ENCODE measurements at regions of chr18 and their contacts with region 1.

Region 1: GRCh38 chr18:9348079-9348681 is 13.6 kb downstream of the TWSG1 start:
- DNase-seq: no peak
- H3K4me3 ChIP-seq: no peak overlapping the region
- H3K27ac ChIP-seq: no peak overlapping the region
- H3K4me1 ChIP-seq: peaks cover 19% of the 10 kb centered on the region
- H3K27me3 ChIP-seq: no peaks in the 10 kb centered on the region
- CTCF ChIP-seq: no peak

Region 2: GRCh38 chr18:9137168-9138066 is 210.8 kb before region 1 on chr18:
- CTCF ChIA-PET with region 1: no interaction called
- POLR2A ChIA-PET with region 1: no interaction called
- intact Hi-C with region 1: no loop called
- DNase-seq: peak; percentile 61 to 72
- H3K4me3 ChIP-seq: peak overlapping the region; percentile 80
- H3K27ac ChIP-seq: peak overlapping the region; percentile 90
- H3K4me1 ChIP-seq: peaks cover 66% of the 10 kb centered on the region
- H3K27me3 ChIP-seq: no peaks in the 10 kb centered on the region
- CTCF ChIP-seq: no peak

Region 3: DNA sequence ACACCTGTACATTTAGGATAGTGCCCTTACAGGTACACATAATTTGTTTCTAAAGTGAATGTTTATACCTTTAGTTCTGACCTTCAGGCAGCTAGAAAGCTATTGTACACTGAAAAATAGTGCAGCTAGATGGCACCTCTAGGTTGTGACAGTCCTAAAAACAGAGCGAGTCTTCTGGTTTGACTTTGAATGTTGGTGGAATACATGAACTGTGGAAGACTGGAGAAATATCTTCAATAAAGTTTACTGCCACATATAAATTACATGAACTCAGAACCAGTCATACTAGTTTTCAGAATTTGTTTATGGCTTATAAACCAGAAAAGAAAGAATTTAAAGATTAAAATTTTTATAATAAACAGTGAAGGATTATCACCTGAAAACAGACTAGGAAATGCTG is 72.3 kb before region 1 on chr18:
- CTCF ChIA-PET with region 1: no interaction called
- POLR2A ChIA-PET with region 1: no interaction called
- intact Hi-C with region 1: no loop called
- DNase-seq: no peak
- H3K4me3 ChIP-seq: no peak overlapping the region
- H3K27ac ChIP-seq: no peak overlapping the region
- H3K4me1 ChIP-seq: no peaks in the 10 kb centered on the region
- H3K27me3 ChIP-seq: no peaks in the 10 kb centered on the region
- CTCF ChIP-seq: no peak

Region 4: DNA sequence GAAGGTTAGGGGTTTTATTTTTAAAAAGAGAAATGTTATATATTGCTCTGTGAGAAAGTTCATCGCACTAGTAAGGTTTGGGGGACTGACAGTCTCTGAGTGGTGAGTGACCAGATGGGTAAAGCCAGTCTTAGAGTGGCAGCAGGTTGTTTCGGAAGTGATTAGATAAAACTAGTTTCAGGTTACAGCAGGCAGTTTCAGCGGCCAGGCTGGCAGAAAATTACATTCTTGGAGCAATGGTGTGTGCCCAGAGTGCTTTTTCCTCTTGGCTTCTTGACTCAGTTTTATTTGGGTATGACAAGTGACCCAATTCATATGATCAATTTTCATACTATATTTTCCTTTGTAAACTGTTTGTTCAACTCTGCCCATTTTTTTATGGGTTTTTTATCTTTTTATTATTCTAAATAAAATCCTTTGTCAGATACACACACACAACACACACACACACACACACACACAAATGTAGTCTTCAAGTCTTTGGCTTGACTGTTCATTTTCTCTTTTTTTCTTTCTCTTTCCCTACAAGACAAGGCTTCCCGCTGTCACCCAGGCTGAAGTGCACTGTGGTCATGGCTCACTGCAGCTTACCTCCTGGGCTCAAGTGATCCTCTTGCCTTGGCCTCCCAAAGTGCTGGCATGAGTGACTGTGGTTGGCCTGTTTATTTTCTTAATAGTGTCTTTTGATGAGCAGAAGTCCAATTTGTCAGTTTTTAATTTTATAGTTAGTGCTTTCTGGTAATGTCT is 158.0 kb after region 1 on chr18:
- CTCF ChIA-PET with region 1: no interaction called
- POLR2A ChIA-PET with region 1: no interaction called
- intact Hi-C with region 1: loop called (anchors 5 kb)
- DNase-seq: peak; percentile 52 to 57
- H3K4me3 ChIP-seq: no peak overlapping the region
- H3K27ac ChIP-seq: peak overlapping the region; percentile 47
- H3K4me1 ChIP-seq: peaks cover 13% of the 10 kb centered on the region
- H3K27me3 ChIP-seq: no peaks in the 10 kb centered on the region
- CTCF ChIP-seq: no peak